PC-3 (cell line): ENCODE measurements at regions of chr5 and their contacts with region 1.

Region 1: GRCh38 chr5:164680812-164681520 is 1175.5 kb downstream of the MAT2B start:
- DNase-seq: no peak
- ATAC-seq: no peak
- H3K4me3 ChIP-seq: no peak overlapping the region
- H3K27ac ChIP-seq: no peak overlapping the region
- H3K4me1 ChIP-seq: no peaks in the 10 kb centered on the region
- H3K27me3 ChIP-seq: no peaks in the 10 kb centered on the region
- CTCF ChIP-seq: no peak

Region 2: DNA sequence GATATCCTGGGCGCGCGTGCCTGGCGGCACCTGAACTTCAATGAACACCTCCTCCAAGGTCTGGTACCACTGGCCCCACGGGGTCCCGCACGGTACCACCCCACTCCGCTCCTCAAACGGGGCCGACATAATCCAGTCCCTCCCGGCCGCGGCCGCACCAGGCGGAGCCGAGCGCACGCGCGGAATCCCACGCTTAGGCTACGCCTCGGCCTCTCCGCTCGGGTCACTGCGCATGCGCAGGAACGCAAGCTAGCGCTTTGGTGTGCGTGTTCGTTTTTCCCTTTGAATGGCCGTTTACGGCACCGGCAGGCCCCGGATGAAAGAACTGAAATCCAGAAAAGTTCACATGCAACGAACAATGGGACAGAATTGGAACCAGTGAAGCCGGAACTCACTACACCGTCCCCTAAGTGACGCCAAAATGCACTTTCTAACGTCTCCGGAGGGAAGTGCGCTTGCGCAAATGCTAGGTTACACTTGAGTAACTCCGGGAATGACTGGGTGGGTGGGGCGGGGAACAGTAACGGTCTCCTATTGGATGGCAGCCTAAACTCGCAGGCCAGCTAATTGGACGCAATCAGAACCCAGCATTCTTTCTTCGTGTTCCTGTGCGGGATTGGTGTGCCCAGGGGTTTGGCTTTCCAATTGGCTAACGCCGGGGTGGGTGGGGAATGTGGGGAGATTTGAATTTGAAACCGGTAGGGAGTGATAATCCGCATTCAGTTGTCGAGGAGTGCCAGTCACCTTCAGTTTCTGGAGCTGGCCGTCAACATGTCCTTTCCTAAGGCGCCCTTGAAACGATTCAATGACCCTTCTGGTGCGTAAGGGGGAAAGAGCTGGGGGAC is 1220.8 kb before region 1 on chr5 and contains the starts of genes HMMR and NUDCD2:
- CTCF ChIA-PET with region 1: no interaction called
- POLR2A ChIA-PET with region 1: interaction called, 16 read pairs
- intact Hi-C with region 1: no loop called
- DNase-seq: peak; percentile 98
- ATAC-seq: peak; percentile 80
- H3K4me3 ChIP-seq: peak within 1 kb of the TSS; percentile 82
- H3K27ac ChIP-seq: peak within 1 kb of the TSS; percentile 99
- H3K4me1 ChIP-seq: peaks cover 13% of the 10 kb centered on the region
- H3K27me3 ChIP-seq: no peaks in the 10 kb centered on the region
- CTCF ChIP-seq: peak; percentile 49; the same call in 1 of the 2 replicates
- total RNA-seq, gene HMMR: 44.8 and 74.6 TPM in 2 replicates
- total RNA-seq, gene NUDCD2: 28.3 and 31.2 TPM in 2 replicates

Region 3: GRCh38 chr5:163867324-163867723 is 813.6 kb before region 1 on chr5:
- CTCF ChIA-PET with region 1: no interaction called
- POLR2A ChIA-PET with region 1: no interaction called
- intact Hi-C with region 1: no loop called
- DNase-seq: no peak
- ATAC-seq: no peak
- H3K4me3 ChIP-seq: no peak overlapping the region
- H3K27ac ChIP-seq: no peak overlapping the region
- H3K4me1 ChIP-seq: no peaks in the 10 kb centered on the region
- H3K27me3 ChIP-seq: no peaks in the 10 kb centered on the region
- CTCF ChIP-seq: no peak

Region 4: DNA sequence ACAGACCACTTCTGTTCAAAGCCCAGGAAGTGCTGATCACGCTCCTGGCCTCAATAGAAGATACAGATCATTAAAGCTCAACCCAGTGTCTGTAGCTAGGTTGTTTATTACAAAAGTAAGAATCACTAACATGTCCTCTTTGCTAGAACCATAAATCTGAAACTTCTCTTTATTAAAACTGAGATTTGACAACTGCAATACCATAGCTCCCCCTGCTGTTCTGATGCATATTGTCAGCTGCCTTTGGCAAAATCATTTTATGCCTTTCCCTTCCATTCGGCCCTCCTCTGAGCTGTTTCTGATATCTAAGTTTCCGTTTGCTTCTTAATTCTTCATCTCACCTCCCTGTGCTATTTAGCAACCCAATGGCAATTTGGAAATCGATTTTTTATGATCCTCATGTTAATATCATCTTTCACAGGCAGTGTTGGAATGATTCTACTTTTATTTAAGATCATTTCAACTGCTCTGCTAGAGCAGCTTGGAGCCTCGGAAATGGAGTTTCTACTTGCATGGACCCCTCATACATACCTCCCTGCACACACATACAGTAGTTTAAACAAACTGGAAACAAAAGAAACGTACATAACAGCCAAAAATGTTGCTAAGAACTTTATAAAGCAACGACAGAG is 176.7 kb before region 1 on chr5:
- CTCF ChIA-PET with region 1: no interaction called
- POLR2A ChIA-PET with region 1: no interaction called
- intact Hi-C with region 1: no loop called
- DNase-seq: peak; percentile 68
- ATAC-seq: peak; percentile 70
- H3K4me3 ChIP-seq: peak overlapping the region; percentile 38; the same call in 1 of the 2 replicates
- H3K27ac ChIP-seq: no peak overlapping the region
- H3K4me1 ChIP-seq: no peaks in the 10 kb centered on the region
- H3K27me3 ChIP-seq: no peaks in the 10 kb centered on the region
- CTCF ChIP-seq: peak; percentile 86

Region 5: DNA sequence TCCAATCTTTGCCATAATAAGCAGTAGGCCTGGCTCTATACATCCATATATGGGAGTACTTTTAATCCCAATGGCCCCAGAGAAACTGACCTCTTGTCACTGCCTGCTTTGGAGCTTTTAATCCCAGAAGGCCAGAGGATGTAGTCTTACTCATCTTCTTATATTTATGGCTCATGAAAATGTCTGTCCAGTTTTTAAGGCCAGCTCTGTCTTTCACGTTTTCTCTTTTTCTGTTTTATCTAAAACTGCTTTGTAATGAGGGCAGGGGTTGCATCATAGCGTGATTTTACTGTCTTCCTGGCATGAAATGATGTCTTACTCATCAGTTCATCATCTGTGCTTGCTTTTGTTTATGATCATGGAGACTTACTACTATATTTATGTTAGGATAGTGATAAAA is 80.7 kb before region 1 on chr5:
- CTCF ChIA-PET with region 1: no interaction called
- POLR2A ChIA-PET with region 1: no interaction called
- intact Hi-C with region 1: no loop called
- DNase-seq: peak; percentile 55
- ATAC-seq: peak; percentile 67
- H3K4me3 ChIP-seq: no peak overlapping the region
- H3K27ac ChIP-seq: peak overlapping the region; percentile 35
- H3K4me1 ChIP-seq: no peaks in the 10 kb centered on the region
- H3K27me3 ChIP-seq: no peaks in the 10 kb centered on the region
- CTCF ChIP-seq: no peak

Region 6: GRCh38 chr5:164909673-164910072 is 228.7 kb after region 1 on chr5:
- CTCF ChIA-PET with region 1: no interaction called
- POLR2A ChIA-PET with region 1: no interaction called
- intact Hi-C with region 1: no loop called
- DNase-seq: no peak
- ATAC-seq: no peak
- H3K4me3 ChIP-seq: no peak overlapping the region
- H3K27ac ChIP-seq: no peak overlapping the region
- H3K4me1 ChIP-seq: no peaks in the 10 kb centered on the region
- H3K27me3 ChIP-seq: no peaks in the 10 kb centered on the region
- CTCF ChIP-seq: no peak